Right cardiac atrium (tissue), 5 donors: ENCODE measurements at regions of chr6 and their contacts with region 1.

Region 1: DNA sequence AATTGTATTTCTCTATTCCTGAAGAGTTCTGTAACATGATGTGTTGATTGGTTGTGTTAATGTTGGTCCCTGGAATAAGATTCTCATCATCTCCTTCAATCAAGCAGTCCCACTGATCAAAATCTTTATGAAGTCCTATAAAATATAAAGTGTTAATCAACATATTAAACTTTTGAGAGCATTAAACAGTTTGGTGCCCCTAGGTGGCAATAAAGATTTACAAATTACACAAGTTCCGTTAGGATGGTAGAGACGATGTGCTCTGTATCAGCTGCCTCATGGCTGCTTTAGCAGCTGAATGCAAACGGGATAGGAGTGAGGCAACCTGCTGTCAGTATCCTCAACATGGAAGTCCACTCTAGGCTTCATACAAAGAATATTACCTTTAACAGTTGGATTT is 16.9 kb downstream of the TDRD6 start:
- DNase-seq: no peak
- ATAC-seq: peak in 1 of 2 donors; percentile 64
- H3K4me3 ChIP-seq: no peak overlapping the region
- H3K27ac ChIP-seq: no peak overlapping the region
- H3K4me1 ChIP-seq: no peaks in the 10 kb centered on the region
- H3K27me3 ChIP-seq: no peaks in the 10 kb centered on the region

Region 2: GRCh38 chr6:45791211-45792168 is 913.1 kb before region 1 on chr6:
- intact Hi-C with region 1: no loop called
- DNase-seq: no peak
- ATAC-seq: peak in 1 of 2 donors; percentile 33
- H3K4me3 ChIP-seq: no peak overlapping the region
- H3K27ac ChIP-seq: no peak overlapping the region
- H3K4me1 ChIP-seq: no peaks in the 10 kb centered on the region
- H3K27me3 ChIP-seq: no peaks in the 10 kb centered on the region

Region 3: DNA sequence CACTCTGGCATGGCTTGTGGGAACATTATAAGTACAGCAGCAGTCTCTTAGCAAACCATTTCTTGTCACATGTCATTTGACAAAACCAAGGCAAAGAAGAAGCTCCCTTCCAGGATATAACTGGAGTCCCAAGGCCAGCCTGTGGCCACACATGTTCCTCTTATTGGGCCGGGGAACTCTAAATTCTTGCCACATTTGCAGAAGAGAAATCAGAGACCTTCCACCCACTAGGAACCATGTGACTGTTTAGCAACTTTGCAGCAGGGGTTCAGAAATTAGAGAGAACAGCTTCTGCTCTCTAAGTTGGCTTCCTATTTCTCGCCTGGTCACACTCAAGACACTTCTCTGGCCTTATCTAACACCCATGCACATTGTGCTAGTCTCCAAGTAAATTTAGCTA is 68.2 kb after region 1 on chr6:
- intact Hi-C with region 1: loop called in 1 of 4 experiments (anchors 10 kb)
- DNase-seq: peak; percentile 23 to 62 (median 56)
- ATAC-seq: peak; percentile 80 to 90
- H3K4me3 ChIP-seq: no peak overlapping the region
- H3K27ac ChIP-seq: no peak overlapping the region
- H3K4me1 ChIP-seq: no peaks in the 10 kb centered on the region
- H3K27me3 ChIP-seq: no peaks in the 10 kb centered on the region

Region 4: GRCh38 chr6:46781478-46782378 is 77.2 kb after region 1 on chr6:
- intact Hi-C with region 1: loop called in 2 of 4 experiments (anchors 10 kb)
- DNase-seq: peak in 2 of 3 donors; percentile 28 to 58
- ATAC-seq: no peak
- H3K4me3 ChIP-seq: no peak overlapping the region
- H3K27ac ChIP-seq: no peak overlapping the region
- H3K4me1 ChIP-seq: no peaks in the 10 kb centered on the region
- H3K27me3 ChIP-seq: no peaks in the 10 kb centered on the region